ENCODE measurements at regions of chr11 and their contacts with region 1.

Region 1: GRCh38 chr11:19432370-19433061 is 191.8 kb upstream of the E2F8 start:
- DNase-seq: peak; percentile 77
- H3K4me3 ChIP-seq: peak overlapping the region; percentile 14; the same call in 1 of the 2 replicates
- H3K27ac ChIP-seq: peak overlapping the region; percentile 59
- H3K27me3 ChIP-seq: no peaks in the 10 kb centered on the region
- CTCF ChIP-seq: no peak

Region 2: GRCh38 chr11:19398772-19399527 is 33.6 kb before region 1 on chr11:
- CTCF ChIA-PET with region 1: no interaction called
- POLR2A ChIA-PET with region 1: interaction called, 12 read pairs
- DNase-seq: peak; percentile 81
- H3K4me3 ChIP-seq: peak overlapping the region; percentile 7
- H3K27ac ChIP-seq: peak overlapping the region; percentile 65
- H3K27me3 ChIP-seq: no peaks in the 10 kb centered on the region
- CTCF ChIP-seq: no peak

Region 3: GRCh38 chr11:19450282-19450681 is 17.8 kb after region 1 on chr11:
- CTCF ChIA-PET with region 1: no interaction called
- POLR2A ChIA-PET with region 1: no interaction called
- DNase-seq: no peak
- H3K4me3 ChIP-seq: no peak overlapping the region
- H3K27ac ChIP-seq: no peak overlapping the region
- H3K27me3 ChIP-seq: peaks cover 10% of the 10 kb centered on the region
- CTCF ChIP-seq: no peak

Region 4: DNA sequence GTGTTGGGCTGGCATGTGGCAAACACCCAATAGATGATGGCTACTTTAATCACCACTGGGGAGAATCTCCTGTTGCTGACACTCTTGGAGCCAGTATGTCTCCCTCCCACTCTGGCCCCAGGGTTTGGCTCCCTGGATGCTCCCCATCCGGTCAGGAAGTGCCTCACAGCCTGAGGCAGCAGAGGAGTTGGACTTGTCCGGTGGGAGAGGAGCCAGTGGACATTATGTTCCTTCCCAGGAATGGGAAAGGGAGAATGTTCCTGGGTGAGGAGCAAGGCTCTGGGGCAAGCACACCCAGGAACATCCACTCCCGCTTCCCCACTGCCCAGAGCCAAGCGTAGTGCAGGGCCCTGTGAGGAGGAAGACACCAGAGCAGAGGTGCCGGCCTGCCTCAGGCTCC is 195.5 kb after region 1 on chr11:
- CTCF ChIA-PET with region 1: no interaction called
- POLR2A ChIA-PET with region 1: no interaction called
- DNase-seq: no peak
- H3K4me3 ChIP-seq: no peak overlapping the region
- H3K27ac ChIP-seq: no peak overlapping the region
- H3K27me3 ChIP-seq: no peaks in the 10 kb centered on the region
- CTCF ChIP-seq: no peak

Measured in AG04450 (cell line).